Aorta (tissue), 5 donors: ENCODE measurements at regions of chr1 and their contacts with region 1.

Region 1: DNA sequence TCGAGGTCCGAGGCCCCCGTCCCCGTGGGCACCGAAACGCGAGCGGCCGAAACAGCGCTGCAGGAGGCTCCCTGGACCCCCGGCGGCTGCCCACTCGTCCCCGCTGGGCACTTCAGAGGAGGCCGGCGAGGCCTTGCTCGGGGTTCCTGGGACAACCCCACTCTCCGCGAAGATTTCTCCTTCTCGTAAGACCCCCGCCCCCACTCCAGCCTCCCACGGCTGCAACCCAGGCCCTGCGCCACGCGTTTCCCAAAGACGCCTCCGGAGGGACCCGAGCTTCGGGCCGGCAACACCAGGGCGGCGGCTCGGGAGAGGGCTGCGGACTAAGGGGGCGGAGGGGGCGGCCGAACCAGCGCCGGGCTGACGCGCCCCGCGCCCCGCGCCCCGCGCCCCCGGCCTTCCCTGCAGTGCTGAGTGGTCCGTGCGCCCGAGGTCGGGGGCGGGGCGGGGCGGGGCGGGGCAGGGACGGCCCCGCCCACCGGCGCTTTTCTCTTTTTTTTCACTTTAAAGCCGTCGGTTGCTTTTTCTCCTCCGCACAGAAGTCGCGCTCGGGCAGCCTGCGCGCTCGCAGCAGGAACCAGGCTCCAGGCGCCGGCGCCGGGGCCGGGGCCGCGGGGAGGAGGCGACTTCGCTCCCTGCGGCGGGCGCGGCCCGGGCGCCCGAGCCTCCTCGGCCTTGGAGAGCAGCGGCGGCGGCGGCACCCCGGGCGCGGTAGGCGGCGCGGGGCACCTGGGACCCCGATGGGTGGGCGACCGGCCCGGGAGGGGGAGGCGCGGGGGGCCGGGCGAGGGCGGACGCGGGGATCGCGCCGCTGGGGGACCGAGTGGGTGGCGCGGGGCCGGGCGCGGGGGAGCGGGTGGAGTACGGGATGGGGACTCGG is at the start of gene SPSB1:
- DNase-seq: peak; percentile 81 to 88
- ATAC-seq: peak; percentile 69
- H3K4me3 ChIP-seq: peak within 1 kb of the TSS; percentile 93 to 99
- H3K27ac ChIP-seq: peak within 1 kb of the TSS; percentile 80 to 93
- H3K4me1 ChIP-seq: peaks cover 0 to 3% of the 10 kb centered on the region in 2 donors
- H3K27me3 ChIP-seq: no peaks in the 10 kb centered on the region
- total RNA-seq, gene SPSB1: 34.8 to 62.0 TPM

Region 2: GRCh38 chr1:9121496-9122409 is 170.8 kb before region 1 on chr1:
- intact Hi-C with region 1: no loop called
- DNase-seq: no peak
- ATAC-seq: no peak
- H3K4me3 ChIP-seq: no peak overlapping the region
- H3K27ac ChIP-seq: no peak overlapping the region
- H3K4me1 ChIP-seq: no peaks in the 10 kb centered on the region
- H3K27me3 ChIP-seq: no peaks in the 10 kb centered on the region

Region 3: GRCh38 chr1:9371391-9371935 is 78.9 kb after region 1 on chr1:
- intact Hi-C with region 1: loop called in 1 of 2 experiments (anchors 5 kb)
- DNase-seq: peak; percentile 89 to 90
- ATAC-seq: peak; percentile 84
- H3K4me3 ChIP-seq: no peak overlapping the region
- H3K27ac ChIP-seq: peak overlapping the region; percentile 83 to 95
- H3K4me1 ChIP-seq: peaks cover 0 to 6% of the 10 kb centered on the region in 2 donors
- H3K27me3 ChIP-seq: no peaks in the 10 kb centered on the region

Region 4: GRCh38 chr1:9399510-9400424 is 107.2 kb after region 1 on chr1:
- intact Hi-C with region 1: loop called in 1 of 2 experiments (anchors 5 kb)
- DNase-seq: peak; percentile 82 to 87
- ATAC-seq: no peak
- H3K4me3 ChIP-seq: no peak overlapping the region
- H3K27ac ChIP-seq: peak overlapping the region; percentile 36 to 77
- H3K4me1 ChIP-seq: peaks cover 0 to 6% of the 10 kb centered on the region in 2 donors
- H3K27me3 ChIP-seq: no peaks in the 10 kb centered on the region

Region 5: GRCh38 chr1:9449106-9449627 is 156.6 kb after region 1 on chr1:
- intact Hi-C with region 1: loop called (anchors 5 kb)
- DNase-seq: peak; percentile 78 to 85
- ATAC-seq: peak; percentile 74
- H3K4me3 ChIP-seq: no peak overlapping the region
- H3K27ac ChIP-seq: peak overlapping the region in 1 of 2 donors; percentile 81
- H3K4me1 ChIP-seq: peaks cover 2 to 5% of the 10 kb centered on the region in 2 donors
- H3K27me3 ChIP-seq: no peaks in the 10 kb centered on the region

Region 6: GRCh38 chr1:9455487-9456234 is 163.1 kb after region 1 on chr1:
- intact Hi-C with region 1: loop called (anchors 2 to 5 kb)
- DNase-seq: peak; percentile 84 to 91
- ATAC-seq: peak; percentile 89
- H3K4me3 ChIP-seq: no peak overlapping the region
- H3K27ac ChIP-seq: no peak overlapping the region
- H3K4me1 ChIP-seq: no peaks in the 10 kb centered on the region
- H3K27me3 ChIP-seq: no peaks in the 10 kb centered on the region

Region 7: GRCh38 chr1:9494929-9495758 is 202.5 kb after region 1 on chr1:
- intact Hi-C with region 1: loop called (anchors 2 kb)
- DNase-seq: peak; percentile 58 to 89
- ATAC-seq: peak; percentile 79
- H3K4me3 ChIP-seq: no peak overlapping the region
- H3K27ac ChIP-seq: no peak overlapping the region
- H3K4me1 ChIP-seq: no peaks in the 10 kb centered on the region
- H3K27me3 ChIP-seq: no peaks in the 10 kb centered on the region

Region 8: DNA sequence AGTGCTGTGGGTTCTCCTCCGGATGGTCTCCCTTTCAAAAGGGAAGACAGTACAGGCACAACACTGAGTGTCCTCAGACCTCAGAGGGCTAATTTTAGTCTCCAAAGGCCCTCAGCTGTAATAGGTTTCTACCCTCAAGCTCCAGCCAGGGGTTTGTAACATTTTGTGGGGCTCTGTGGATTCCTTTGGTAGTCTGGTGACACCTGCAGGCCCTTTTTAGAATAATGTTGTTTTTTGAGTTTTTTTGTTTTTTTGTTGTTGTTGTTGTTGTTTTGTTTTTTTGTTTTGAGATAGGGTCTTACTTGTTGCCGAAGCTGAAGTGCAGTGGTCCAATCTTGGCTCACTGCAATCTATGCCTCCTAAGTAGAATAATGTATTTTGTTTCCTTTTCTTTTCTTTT is 281.1 kb after region 1 on chr1:
- intact Hi-C with region 1: loop called in 1 of 2 experiments (anchors 10 kb)
- DNase-seq: no peak
- ATAC-seq: no peak
- H3K4me3 ChIP-seq: no peak overlapping the region
- H3K27ac ChIP-seq: no peak overlapping the region
- H3K4me1 ChIP-seq: no peaks in the 10 kb centered on the region
- H3K27me3 ChIP-seq: no peaks in the 10 kb centered on the region